ENCODE measurements at regions of chr4 and their contacts with region 1.

Region 1: GRCh38 chr4:38069271-38069760 is 109.1 kb downstream of the PTTG2 start:
- DNase-seq: no peak
- ATAC-seq: peak in 3 of 4 donors; percentile 38 to 56 (median 55)
- H3K4me3 ChIP-seq: no peak overlapping the region
- H3K27ac ChIP-seq: peak overlapping the region in 10 of 12 donors; percentile 18 to 71 (median 41)
- H3K4me1 ChIP-seq: peaks cover 10 to 78% (median 33%) of the 10 kb centered on the region in 12 donors
- H3K27me3 ChIP-seq: no peaks in the 10 kb centered on the region
- CTCF ChIP-seq: peak in 9 of 12 donors; percentile 16 to 58 (median 32)
- POLR2A ChIP-seq: no peak

Region 2: GRCh38 chr4:38154681-38155608 is 85.6 kb after region 1 on chr4:
- intact Hi-C with region 1: loop called in 4 of 10 experiments (anchors 5 to 10 kb)
- DNase-seq: peak; percentile 42 to 73 (median 69)
- ATAC-seq: peak; percentile 53 to 82 (median 77)
- H3K4me3 ChIP-seq: peak overlapping the region in 3 of 12 donors; percentile 3 to 18 (median 11)
- H3K27ac ChIP-seq: peak overlapping the region; percentile 59 to 79 (median 69)
- H3K4me1 ChIP-seq: peaks cover 0 to 48% (median 33%) of the 10 kb centered on the region in 12 donors
- H3K27me3 ChIP-seq: no peaks in the 10 kb centered on the region
- CTCF ChIP-seq: no peak
- POLR2A ChIP-seq: no peak

Region 3: GRCh38 chr4:38160487-38161207 is 91.3 kb after region 1 on chr4:
- intact Hi-C with region 1: loop called in 4 of 10 experiments (anchors 5 to 10 kb)
- DNase-seq: no peak
- ATAC-seq: peak in 3 of 4 donors; percentile 60 to 65 (median 64)
- H3K4me3 ChIP-seq: no peak overlapping the region
- H3K27ac ChIP-seq: peak overlapping the region in 4 of 12 donors; percentile 2 to 85 (median 34)
- H3K4me1 ChIP-seq: peaks cover 0 to 63% (median 31%) of the 10 kb centered on the region in 12 donors
- H3K27me3 ChIP-seq: no peaks in the 10 kb centered on the region
- CTCF ChIP-seq: no peak
- POLR2A ChIP-seq: no peak

Region 4: GRCh38 chr4:38179690-38180377 is 110.5 kb after region 1 on chr4:
- intact Hi-C with region 1: loop called in 8 of 10 experiments (anchors 5 kb)
- DNase-seq: peak; percentile 54 to 78 (median 68)
- ATAC-seq: peak in 3 of 4 donors; percentile 31 to 68 (median 68)
- H3K4me3 ChIP-seq: no peak overlapping the region
- H3K27ac ChIP-seq: no peak overlapping the region
- H3K4me1 ChIP-seq: peaks cover 0 to 60% (median 19%) of the 10 kb centered on the region in 12 donors
- H3K27me3 ChIP-seq: no peaks in the 10 kb centered on the region
- CTCF ChIP-seq: peak; percentile 89 to 96 (median 92)
- POLR2A ChIP-seq: no peak

Region 5: DNA sequence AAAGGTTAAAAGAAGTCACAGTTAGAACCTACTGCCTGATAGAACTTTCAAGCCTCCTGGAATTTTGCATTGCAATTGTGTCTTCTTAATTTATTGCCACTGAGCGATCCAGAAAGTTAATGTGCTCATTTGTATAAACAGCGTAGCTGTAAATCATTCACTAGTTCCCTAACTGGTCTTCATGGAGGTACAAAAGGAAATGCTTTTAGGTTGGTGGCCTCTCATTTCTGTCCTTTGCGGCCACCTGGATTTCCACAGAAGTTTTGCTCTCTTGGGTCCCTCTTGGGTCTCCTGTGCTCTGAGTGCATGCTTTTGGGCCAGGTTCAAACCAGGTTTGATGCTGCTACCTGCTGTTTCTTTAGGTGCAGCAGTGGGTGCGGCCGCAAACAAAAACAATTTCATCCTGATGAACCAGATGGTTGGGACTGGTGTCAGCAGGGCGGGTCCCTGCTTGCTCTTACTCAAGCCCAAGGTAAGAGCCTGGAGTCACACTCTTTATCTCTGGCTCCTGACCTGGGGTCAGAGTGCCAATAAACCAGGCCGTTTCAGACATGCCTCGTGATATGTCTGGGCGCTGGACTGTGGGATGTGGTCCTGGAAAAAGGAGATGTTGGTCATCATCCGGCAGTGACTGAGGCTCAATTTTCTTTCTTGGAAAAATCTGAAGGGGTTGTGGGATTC is 160.9 kb after region 1 on chr4:
- intact Hi-C with region 1: no loop called
- DNase-seq: no peak
- ATAC-seq: no peak
- H3K4me3 ChIP-seq: no peak overlapping the region
- H3K27ac ChIP-seq: no peak overlapping the region
- H3K4me1 ChIP-seq: peaks cover 0 to 12% (median 0%) of the 10 kb centered on the region in 12 donors
- H3K27me3 ChIP-seq: no peaks in the 10 kb centered on the region
- CTCF ChIP-seq: no peak
- POLR2A ChIP-seq: no peak

Region 6: GRCh38 chr4:38455092-38455862 is 386.0 kb after region 1 on chr4:
- intact Hi-C with region 1: no loop called
- DNase-seq: no peak
- ATAC-seq: no peak
- H3K4me3 ChIP-seq: no peak overlapping the region
- H3K27ac ChIP-seq: no peak overlapping the region
- H3K4me1 ChIP-seq: peaks cover 0 to 18% (median 0%) of the 10 kb centered on the region in 12 donors
- H3K27me3 ChIP-seq: no peaks in the 10 kb centered on the region
- CTCF ChIP-seq: no peak
- POLR2A ChIP-seq: no peak

Region 7: GRCh38 chr4:38675146-38676121 is 606.1 kb after region 1 on chr4:
- intact Hi-C with region 1: loop called in 9 of 10 experiments (anchors 5 to 10 kb)
- DNase-seq: peak in 4 of 5 donors; percentile 68 to 78 (median 76)
- ATAC-seq: peak in 3 of 4 donors; percentile 40 to 45 (median 42)
- H3K4me3 ChIP-seq: peak overlapping the region in 4 of 12 donors; percentile 2 to 42 (median 18)
- H3K27ac ChIP-seq: peak overlapping the region in 10 of 12 donors; percentile 97 to 100 (median 99)
- H3K4me1 ChIP-seq: peaks cover 30 to 91% (median 81%) of the 10 kb centered on the region in 12 donors
- H3K27me3 ChIP-seq: no peaks in the 10 kb centered on the region
- CTCF ChIP-seq: peak; percentile 84 to 97 (median 92)
- POLR2A ChIP-seq: no peak

Region 8: DNA sequence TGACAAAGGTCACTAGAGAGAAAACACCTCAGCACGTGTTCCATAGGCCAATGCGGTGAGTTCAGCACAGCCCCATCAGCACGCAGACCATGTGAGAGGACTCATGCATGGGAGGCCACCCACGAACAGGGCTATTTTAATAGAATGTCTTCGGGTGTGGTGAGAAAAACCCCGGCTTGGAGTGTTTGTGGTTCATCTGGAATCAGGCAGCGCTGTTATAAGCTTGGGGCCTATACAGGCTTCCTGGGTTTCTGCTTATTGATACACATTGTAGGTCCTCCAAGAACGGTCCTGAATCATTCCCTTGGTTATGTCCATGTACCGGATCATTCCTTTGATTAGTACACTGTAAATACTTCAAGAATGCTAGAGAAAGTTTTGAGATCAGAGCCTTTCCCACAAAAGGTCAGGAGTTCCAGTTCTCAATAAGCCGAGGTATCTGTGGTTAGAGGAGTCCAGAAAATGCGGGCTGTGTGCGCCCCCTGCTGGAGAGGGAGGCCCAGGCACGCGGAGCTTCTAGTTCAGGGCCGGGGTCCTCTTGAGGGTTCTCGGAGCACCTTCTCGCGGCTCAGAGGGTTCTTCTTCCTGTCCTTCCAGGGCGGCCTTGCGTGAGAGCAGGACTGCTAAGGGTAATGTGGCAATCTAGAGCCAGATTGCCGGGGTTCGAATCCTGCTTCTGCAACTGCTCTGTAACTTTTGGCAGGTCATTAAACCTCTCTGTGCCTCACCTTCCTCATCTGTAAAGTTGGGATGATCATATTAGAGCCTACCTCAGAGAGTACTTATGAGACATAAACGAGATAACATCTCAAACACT is 661.7 kb after region 1 on chr4:
- intact Hi-C with region 1: loop called in 5 of 10 experiments (anchors 2 to 5 kb)
- DNase-seq: peak; percentile 76 to 90 (median 79)
- ATAC-seq: peak; percentile 78 to 91 (median 89)
- H3K4me3 ChIP-seq: no peak overlapping the region
- H3K27ac ChIP-seq: no peak overlapping the region
- H3K4me1 ChIP-seq: peaks cover 0 to 21% (median 4%) of the 10 kb centered on the region in 12 donors
- H3K27me3 ChIP-seq: no peaks in the 10 kb centered on the region
- CTCF ChIP-seq: peak; percentile 88 to 98 (median 96)
- POLR2A ChIP-seq: no peak